ENCODE measurements at regions of chr1 and their contacts with region 1.

Region 1: DNA sequence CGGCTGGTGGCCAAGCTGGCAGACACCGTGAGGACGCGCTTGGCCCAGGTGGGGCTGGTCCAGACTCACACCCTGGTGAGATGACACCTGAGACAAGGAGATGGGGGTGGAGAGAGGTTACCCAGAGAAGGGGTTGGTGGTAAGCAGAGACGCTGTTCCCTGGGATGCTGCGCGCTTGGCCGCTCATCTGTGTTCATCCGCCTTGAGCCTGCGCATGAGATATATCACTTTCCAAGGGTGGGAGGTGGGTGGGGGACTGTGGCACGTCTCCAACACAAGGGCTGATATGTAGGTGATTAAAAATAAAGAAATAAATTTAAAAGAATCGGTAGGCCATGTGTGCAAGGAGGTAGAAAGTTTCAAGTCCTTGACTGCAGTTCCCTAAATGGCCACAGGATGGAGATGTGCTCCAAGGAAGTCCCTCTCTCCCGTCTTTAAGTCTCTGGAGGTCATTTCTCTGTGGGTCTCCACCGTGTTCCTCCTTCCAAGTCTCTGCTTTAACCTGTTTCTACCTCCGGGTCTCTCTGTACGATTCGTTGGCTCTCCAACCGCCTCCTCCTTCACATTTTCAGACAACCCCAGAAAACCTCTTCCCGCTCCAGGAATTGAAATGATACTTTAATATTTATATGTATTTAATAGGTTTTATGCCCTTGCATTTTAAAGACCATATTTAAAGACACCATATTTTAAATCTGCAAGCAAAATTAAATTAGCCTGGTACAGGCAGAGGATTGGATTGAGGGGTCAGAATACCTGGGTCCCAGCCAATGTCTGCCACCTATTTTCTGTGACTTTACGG is 4.5 kb downstream of the TTC24 start:
- DNase-seq: no peak
- H3K4me3 ChIP-seq: no peak overlapping the region
- H3K27ac ChIP-seq: no peak overlapping the region
- H3K4me1 ChIP-seq: no peaks in the 10 kb centered on the region
- H3K27me3 ChIP-seq: no peaks in the 10 kb centered on the region
- CTCF ChIP-seq: peak; percentile 85 to 99 (median 93)
- POLR2A ChIP-seq: no peak

Region 2: DNA sequence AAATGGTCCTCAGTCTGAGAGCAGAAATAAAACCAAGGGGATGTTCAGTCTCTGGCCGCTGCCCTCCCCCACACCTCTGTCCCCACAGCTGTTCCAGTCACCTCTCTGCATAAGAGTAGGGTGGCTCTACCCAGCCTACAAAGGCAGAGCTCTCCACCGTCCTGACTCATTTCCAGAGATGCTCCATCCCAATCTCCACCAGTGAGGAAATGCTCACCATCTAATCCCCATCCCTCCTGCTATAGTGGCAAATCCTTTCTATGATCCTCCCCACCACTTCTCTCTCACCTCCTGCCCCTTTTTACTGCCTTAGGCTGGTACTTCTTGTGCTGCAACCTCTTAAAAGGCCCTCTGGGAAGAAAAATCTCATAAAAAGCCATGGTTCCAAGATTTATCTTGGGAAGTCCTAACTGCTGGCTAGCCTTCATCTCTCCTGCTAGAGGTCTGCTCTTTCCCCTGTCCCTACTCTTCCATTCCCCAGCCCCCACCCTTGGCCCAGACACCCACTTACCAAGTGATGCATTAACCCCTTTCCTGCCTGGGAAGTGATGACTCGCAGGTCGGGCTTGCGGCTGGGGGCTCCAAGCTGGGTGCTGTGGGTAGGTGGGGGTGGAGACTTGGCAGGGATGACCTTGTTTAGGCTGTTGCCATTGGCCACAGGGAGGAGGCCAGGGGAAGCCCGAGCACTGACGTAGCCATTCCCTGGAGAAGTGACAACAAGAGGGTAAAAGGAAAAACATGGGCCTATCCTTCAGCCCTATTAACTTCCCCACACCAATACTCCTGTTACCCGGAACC is 107.3 kb before region 1 on chr1:
- intact Hi-C with region 1: loop called (anchors 10 kb)
- DNase-seq: no peak
- H3K4me3 ChIP-seq: no peak overlapping the region
- H3K27ac ChIP-seq: peak overlapping the region; percentile 47 to 91 (median 86)
- H3K4me1 ChIP-seq: peaks cover 8 to 84% (median 45%) of the 10 kb centered on the region in 3 donors
- H3K27me3 ChIP-seq: no peaks in the 10 kb centered on the region
- CTCF ChIP-seq: no peak
- POLR2A ChIP-seq: no peak

Region 3: GRCh38 chr1:156524481-156524869 is 59.5 kb before region 1 on chr1:
- intact Hi-C with region 1: no loop called
- DNase-seq: no peak
- H3K4me3 ChIP-seq: no peak overlapping the region
- H3K27ac ChIP-seq: peak overlapping the region in 1 of 4 donors; percentile 18
- H3K4me1 ChIP-seq: peaks cover 0 to 6% (median 0%) of the 10 kb centered on the region in 3 donors
- H3K27me3 ChIP-seq: no peaks in the 10 kb centered on the region
- CTCF ChIP-seq: no peak
- POLR2A ChIP-seq: no peak

Region 4: DNA sequence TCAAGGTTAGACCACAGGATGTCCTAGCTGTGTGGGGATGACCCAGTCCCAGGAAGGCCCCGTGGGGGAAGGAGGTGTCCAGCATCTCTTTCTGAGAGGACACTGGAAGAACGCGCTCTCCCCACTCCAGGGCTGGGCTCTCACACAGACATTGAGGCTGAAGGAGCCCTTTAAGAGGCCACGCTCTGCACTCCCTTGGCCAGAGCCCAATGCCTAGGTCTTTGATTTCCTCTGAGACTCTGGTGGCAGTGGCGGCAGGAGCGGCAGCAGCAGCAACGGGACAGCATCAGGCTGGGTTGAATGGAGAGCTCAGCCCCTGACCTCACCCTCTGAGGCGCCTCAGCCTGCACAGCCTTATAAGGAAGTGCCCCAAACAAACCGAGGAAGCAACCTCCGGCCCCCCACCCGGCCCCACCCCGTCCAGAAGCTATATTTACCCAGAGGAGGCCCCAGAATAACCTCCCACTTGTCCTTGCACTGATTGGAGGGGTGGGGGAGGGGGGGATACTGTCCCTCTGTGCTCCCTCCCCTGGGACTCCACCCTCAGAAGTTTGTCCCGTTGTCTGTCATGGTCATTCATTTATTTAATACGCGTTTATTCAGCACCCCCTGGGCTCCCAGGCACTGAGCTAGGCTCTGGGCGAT is 80.9 kb after region 1 on chr1:
- intact Hi-C with region 1: no loop called
- DNase-seq: no peak
- H3K4me3 ChIP-seq: no peak overlapping the region
- H3K27ac ChIP-seq: peak overlapping the region; percentile 61 to 89 (median 80)
- H3K4me1 ChIP-seq: peaks cover 35 to 100% (median 78%) of the 10 kb centered on the region in 3 donors
- H3K27me3 ChIP-seq: no peaks in the 10 kb centered on the region
- CTCF ChIP-seq: no peak
- POLR2A ChIP-seq: no peak

Measured in esophagus squamous epithelium (tissue), 5 donors.